ENCODE measurements at regions of chr9 and their contacts with region 1.

Region 1: GRCh38 chr9:7028591-7028990 is 270.8 kb downstream of the KDM4C start:
- DNase-seq: no peak
- H3K4me3 ChIP-seq: no peak overlapping the region
- H3K27ac ChIP-seq: no peak overlapping the region
- H3K4me1 ChIP-seq: no peaks in the 10 kb centered on the region
- H3K27me3 ChIP-seq: no peaks in the 10 kb centered on the region
- CTCF ChIP-seq: no peak
- EP300 ChIP-seq: no peak
- POLR2A ChIP-seq: no peak

Region 2: GRCh38 chr9:7088611-7089010 is 60.0 kb after region 1 on chr9:
- intact Hi-C with region 1: loop called in 1 of 4 experiments (anchors 10 kb)
- DNase-seq: no peak
- H3K4me3 ChIP-seq: no peak overlapping the region
- H3K27ac ChIP-seq: no peak overlapping the region
- H3K4me1 ChIP-seq: peaks cover 4% of the 10 kb centered on the region
- H3K27me3 ChIP-seq: no peaks in the 10 kb centered on the region
- CTCF ChIP-seq: no peak
- EP300 ChIP-seq: no peak
- POLR2A ChIP-seq: no peak